Heart right ventricle (tissue), 16 donors: ENCODE measurements at regions of chr14 and their contacts with region 1.

Region 1: GRCh38 chr14:74612350-74613021 is 449 bp upstream of the LTBP2 start:
- DNase-seq: peak; percentile 65 to 83
- ATAC-seq: peak; percentile 71 to 89 (median 80)
- H3K4me3 ChIP-seq: peak overlapping the region; percentile 47 to 86 (median 68)
- H3K27ac ChIP-seq: peak overlapping the region in 9 of 10 donors; percentile 28 to 86 (median 71)
- H3K4me1 ChIP-seq: peaks cover 3 to 66% (median 17%) of the 10 kb centered on the region in 9 donors
- H3K27me3 ChIP-seq: peaks cover 0 to 43% (median 21%) of the 10 kb centered on the region in 7 donors
- CTCF ChIP-seq: peak; percentile 53 to 92 (median 73)

Region 2: GRCh38 chr14:74362361-74362915 is 250.0 kb before region 1 on chr14:
- intact Hi-C with region 1: loop called in 2 of 10 experiments (anchors 10 kb)
- DNase-seq: peak; percentile 76 to 77
- ATAC-seq: peak; percentile 74 to 88 (median 80)
- H3K4me3 ChIP-seq: no peak overlapping the region
- H3K27ac ChIP-seq: no peak overlapping the region
- H3K4me1 ChIP-seq: peaks cover 0 to 3% (median 0%) of the 10 kb centered on the region in 9 donors
- H3K27me3 ChIP-seq: peaks cover 0 to 28% (median 5%) of the 10 kb centered on the region in 7 donors
- CTCF ChIP-seq: peak; percentile 88 to 97 (median 92)

Region 3: DNA sequence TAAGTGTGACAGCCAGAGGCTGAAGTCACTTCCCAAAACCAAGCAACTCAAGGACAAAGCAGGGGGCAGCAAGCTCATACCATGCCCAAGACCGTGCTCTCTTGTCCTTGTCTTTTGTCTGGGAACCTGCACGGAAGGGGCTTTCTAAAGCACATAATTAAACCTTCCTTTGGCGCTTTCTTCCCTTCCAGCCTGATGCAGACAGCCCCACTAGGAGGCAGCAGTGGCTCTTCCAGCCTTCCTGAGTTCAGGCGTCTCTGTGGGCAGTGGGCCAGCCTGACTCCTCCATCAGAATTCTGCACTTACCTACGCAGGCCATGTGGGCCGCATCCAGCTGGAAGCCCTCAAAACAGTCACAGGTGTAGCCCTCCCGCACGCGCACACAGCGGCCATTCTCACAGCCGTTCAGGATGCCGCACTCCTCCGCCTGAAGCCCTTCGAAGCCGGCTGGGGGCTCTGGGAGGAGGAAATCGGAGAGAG is 111.3 kb before region 1 on chr14:
- intact Hi-C with region 1: loop called in 4 of 10 experiments (anchors 5 to 10 kb)
- DNase-seq: peak; percentile 58 to 66
- ATAC-seq: peak; percentile 38 to 77 (median 62)
- H3K4me3 ChIP-seq: no peak overlapping the region
- H3K27ac ChIP-seq: no peak overlapping the region
- H3K4me1 ChIP-seq: peaks cover 0 to 15% (median 0%) of the 10 kb centered on the region in 9 donors
- H3K27me3 ChIP-seq: no peaks in the 10 kb centered on the region
- CTCF ChIP-seq: peak; percentile 21 to 67 (median 60)

Region 4: GRCh38 chr14:74531467-74531866 is 81.0 kb before region 1 on chr14:
- intact Hi-C with region 1: loop called in 1 of 10 experiments (anchors 10 kb)
- DNase-seq: peak; percentile 38 to 39
- ATAC-seq: peak; percentile 61 to 83 (median 68)
- H3K4me3 ChIP-seq: no peak overlapping the region
- H3K27ac ChIP-seq: no peak overlapping the region
- H3K4me1 ChIP-seq: peaks cover 0 to 6% (median 0%) of the 10 kb centered on the region in 9 donors
- H3K27me3 ChIP-seq: no peaks in the 10 kb centered on the region
- CTCF ChIP-seq: peak in 7 of 9 donors; percentile 17 to 53 (median 39)

Region 5: GRCh38 chr14:74667758-74668157 is 55.3 kb after region 1 on chr14:
- intact Hi-C with region 1: loop called in 2 of 10 experiments (anchors 5 kb)
- DNase-seq: no peak
- ATAC-seq: no peak
- H3K4me3 ChIP-seq: no peak overlapping the region
- H3K27ac ChIP-seq: no peak overlapping the region
- H3K4me1 ChIP-seq: peaks cover 0 to 18% (median 12%) of the 10 kb centered on the region in 9 donors
- H3K27me3 ChIP-seq: no peaks in the 10 kb centered on the region
- CTCF ChIP-seq: no peak

Region 6: DNA sequence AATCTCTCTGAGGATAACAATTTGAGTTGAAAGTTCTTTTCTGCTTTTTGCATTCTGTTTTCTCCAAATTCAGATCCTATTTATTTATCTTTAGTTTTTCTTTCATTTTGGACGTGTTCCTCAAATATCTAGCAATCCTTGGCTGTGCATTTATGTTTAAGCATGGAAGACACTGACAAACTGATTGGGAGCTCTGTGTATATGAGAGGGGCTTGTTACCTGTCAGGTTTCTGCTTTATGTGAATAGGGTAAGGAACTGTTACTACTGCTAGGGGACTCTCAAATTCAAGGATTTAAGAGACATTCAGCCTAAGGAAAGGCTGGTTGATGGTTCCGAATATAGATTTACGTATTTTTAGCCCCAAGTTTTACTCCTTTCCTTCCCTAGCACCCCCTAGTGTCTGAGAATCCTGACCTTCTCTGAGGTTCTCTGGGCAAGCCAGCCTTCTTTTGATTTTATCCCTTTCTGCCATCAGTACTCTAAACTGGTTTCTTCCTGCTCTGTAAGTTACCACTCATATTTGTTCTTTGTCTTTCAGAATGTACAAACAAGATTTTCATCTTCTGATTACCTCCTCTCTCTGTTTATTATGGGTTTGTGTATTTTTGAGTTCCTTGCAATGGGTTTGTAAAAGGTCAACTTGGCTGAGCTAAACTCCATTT is 181.2 kb after region 1 on chr14:
- intact Hi-C with region 1: loop called in 4 of 10 experiments (anchors 10 kb)
- DNase-seq: no peak
- ATAC-seq: no peak
- H3K4me3 ChIP-seq: no peak overlapping the region
- H3K27ac ChIP-seq: peak overlapping the region in 4 of 10 donors; percentile 24 to 55 (median 36)
- H3K4me1 ChIP-seq: peaks cover 7 to 31% (median 28%) of the 10 kb centered on the region in 9 donors
- H3K27me3 ChIP-seq: no peaks in the 10 kb centered on the region
- CTCF ChIP-seq: peak in 6 of 9 donors; percentile 23 to 46 (median 36)